ENCODE measurements at regions of chr14 and their contacts with region 1.

Region 1: GRCh38 chr14:68939893-68940613 is 39.0 kb downstream of the ACTN1 start:
- DNase-seq: peak; percentile 98
- H3K4me3 ChIP-seq: no peak overlapping the region
- H3K27ac ChIP-seq: peak overlapping the region; percentile 88
- H3K4me1 ChIP-seq: peaks cover 61% of the 10 kb centered on the region
- H3K27me3 ChIP-seq: no peaks in the 10 kb centered on the region
- CTCF ChIP-seq: no peak
- POLR2A ChIP-seq: peak; percentile 51

Region 2: GRCh38 chr14:68874746-68875155 is 65.3 kb before region 1 on chr14:
- CTCF ChIA-PET with region 1: no interaction called
- POLR2A ChIA-PET with region 1: no interaction called
- dilution Hi-C with region 1: no loop called
- intact Hi-C with region 1: no loop called
- DNase-seq: no peak
- H3K4me3 ChIP-seq: no peak overlapping the region
- H3K27ac ChIP-seq: no peak overlapping the region
- H3K4me1 ChIP-seq: no peaks in the 10 kb centered on the region
- H3K27me3 ChIP-seq: no peaks in the 10 kb centered on the region
- CTCF ChIP-seq: no peak
- POLR2A ChIP-seq: no peak

Region 3: DNA sequence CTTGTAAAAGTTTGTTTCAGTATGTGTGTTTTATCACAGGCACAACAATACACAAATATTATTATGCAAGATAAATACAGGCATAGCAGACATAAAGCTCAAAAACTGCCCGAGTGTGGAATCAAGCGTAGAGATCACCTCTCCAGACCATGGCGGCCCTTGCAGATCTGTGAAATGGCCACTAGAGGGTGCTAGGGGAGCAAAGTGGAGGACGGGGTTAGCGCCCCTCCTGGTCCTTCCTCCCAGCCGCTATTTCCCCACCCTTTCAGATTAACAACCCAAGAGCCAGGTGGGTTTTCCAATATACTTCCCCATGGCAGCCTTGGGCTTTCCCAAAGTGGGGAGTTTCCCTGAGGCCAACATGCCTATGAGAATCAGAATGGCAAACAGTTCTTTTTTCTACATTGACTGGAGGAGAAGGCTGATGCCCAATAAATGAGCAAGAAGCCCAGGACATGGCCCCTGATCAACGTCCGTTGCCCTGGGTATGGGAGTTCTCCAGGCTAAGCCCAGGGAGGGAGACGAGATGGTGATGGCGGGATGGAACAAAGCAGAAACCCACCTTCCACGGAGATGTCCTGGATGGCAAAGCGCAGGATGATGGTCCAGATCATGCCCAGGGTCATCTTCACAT is 28.3 kb before region 1 on chr14:
- CTCF ChIA-PET with region 1: interaction called, 22 read pairs
- POLR2A ChIA-PET with region 1: no interaction called
- dilution Hi-C with region 1: no loop called
- intact Hi-C with region 1: loop called (anchors 1 kb)
- DNase-seq: peak; percentile 76
- H3K4me3 ChIP-seq: no peak overlapping the region
- H3K27ac ChIP-seq: no peak overlapping the region
- H3K4me1 ChIP-seq: no peaks in the 10 kb centered on the region
- H3K27me3 ChIP-seq: no peaks in the 10 kb centered on the region
- CTCF ChIP-seq: peak; percentile 96 to 99
- POLR2A ChIP-seq: no peak

Region 4: DNA sequence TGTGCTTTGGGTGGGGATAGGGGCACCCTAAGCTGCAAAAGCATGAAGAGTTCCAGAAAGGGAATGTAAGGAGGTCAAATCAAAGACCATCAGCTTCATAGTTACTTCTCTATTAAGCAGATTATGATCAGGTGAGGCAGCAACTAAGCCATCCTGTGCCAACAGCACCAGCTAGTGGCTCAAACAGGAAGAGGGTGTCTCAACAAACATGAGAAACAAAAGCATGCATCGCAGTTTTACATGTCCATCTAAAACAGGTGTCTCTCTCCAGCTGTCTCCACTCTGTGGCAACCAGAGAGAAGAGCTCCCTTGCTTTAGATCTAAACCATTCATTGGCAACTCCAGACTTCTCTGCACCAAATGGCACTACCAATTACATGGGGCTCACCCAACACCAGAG is 13.8 kb before region 1 on chr14:
- CTCF ChIA-PET with region 1: interaction called, 11 read pairs
- POLR2A ChIA-PET with region 1: interaction called, 4 read pairs
- dilution Hi-C with region 1: no loop called
- intact Hi-C with region 1: loop called (anchors 1 kb)
- DNase-seq: no peak
- H3K4me3 ChIP-seq: no peak overlapping the region
- H3K27ac ChIP-seq: no peak overlapping the region
- H3K4me1 ChIP-seq: no peaks in the 10 kb centered on the region
- H3K27me3 ChIP-seq: no peaks in the 10 kb centered on the region
- CTCF ChIP-seq: peak; percentile 27 to 46
- POLR2A ChIP-seq: no peak

Region 5: GRCh38 chr14:68951042-68951914 is 11.2 kb after region 1 on chr14:
- CTCF ChIA-PET with region 1: interaction called, 25 read pairs
- POLR2A ChIA-PET with region 1: interaction called, 5 read pairs
- dilution Hi-C with region 1: no loop called
- intact Hi-C with region 1: loop called (anchors 1 kb)
- DNase-seq: peak; percentile 74
- H3K4me3 ChIP-seq: no peak overlapping the region
- H3K27ac ChIP-seq: peak overlapping the region; percentile 77
- H3K4me1 ChIP-seq: peaks cover 78% of the 10 kb centered on the region
- H3K27me3 ChIP-seq: no peaks in the 10 kb centered on the region
- CTCF ChIP-seq: no peak
- POLR2A ChIP-seq: no peak

Region 6: GRCh38 chr14:68958553-68958952 is 18.5 kb after region 1 on chr14:
- CTCF ChIA-PET with region 1: interaction called, 18 read pairs
- POLR2A ChIA-PET with region 1: interaction called, 4 read pairs
- dilution Hi-C with region 1: no loop called
- intact Hi-C with region 1: loop called (anchors 1 kb)
- DNase-seq: peak; percentile 89
- H3K4me3 ChIP-seq: no peak overlapping the region
- H3K27ac ChIP-seq: peak overlapping the region; percentile 56
- H3K4me1 ChIP-seq: peaks cover 62% of the 10 kb centered on the region
- H3K27me3 ChIP-seq: no peaks in the 10 kb centered on the region
- CTCF ChIP-seq: no peak
- POLR2A ChIP-seq: no peak

Region 7: GRCh38 chr14:69079183-69079742 is 139.2 kb after region 1 on chr14:
- CTCF ChIA-PET with region 1: interaction called, 3 read pairs
- POLR2A ChIA-PET with region 1: no interaction called
- dilution Hi-C with region 1: no loop called
- intact Hi-C with region 1: loop called (anchors 1 kb)
- DNase-seq: peak; percentile 94
- H3K4me3 ChIP-seq: peak overlapping the region in 1 of 3 experiments; percentile 33
- H3K27ac ChIP-seq: peak overlapping the region; percentile 100
- H3K4me1 ChIP-seq: peaks cover 47% of the 10 kb centered on the region
- H3K27me3 ChIP-seq: no peaks in the 10 kb centered on the region
- CTCF ChIP-seq: no peak
- POLR2A ChIP-seq: no peak

Region 8: DNA sequence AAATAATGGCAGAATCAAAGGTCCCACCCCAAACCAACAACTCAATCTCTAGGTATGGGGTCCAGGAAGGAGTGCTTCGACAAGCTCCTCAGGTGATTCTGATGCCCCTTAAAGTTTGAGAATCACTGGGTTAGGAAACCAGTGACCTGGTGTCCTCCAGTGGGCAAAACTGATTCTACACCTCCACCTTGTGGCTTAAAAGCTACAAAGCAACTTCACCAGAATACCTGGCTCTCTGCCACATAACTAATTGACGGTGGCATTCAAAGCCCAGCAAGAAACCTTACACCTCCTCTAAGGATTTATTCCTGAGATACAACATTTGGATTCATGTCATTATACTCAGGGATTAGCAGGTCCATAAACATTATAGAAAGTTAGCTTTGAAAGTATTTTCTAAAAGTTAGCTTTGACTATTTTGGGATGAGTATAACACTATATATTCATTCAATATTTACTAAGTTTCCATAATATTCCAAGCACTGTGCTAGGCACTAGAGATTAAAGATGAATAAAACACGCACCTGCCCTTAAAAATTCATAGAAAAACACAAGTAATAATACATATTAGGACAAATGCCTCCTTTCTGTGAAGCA is 167.5 kb after region 1 on chr14:
- CTCF ChIA-PET with region 1: interaction called, 11 read pairs
- POLR2A ChIA-PET with region 1: no interaction called
- dilution Hi-C with region 1: no loop called
- intact Hi-C with region 1: no loop called
- DNase-seq: peak; percentile 76
- H3K4me3 ChIP-seq: no peak overlapping the region
- H3K27ac ChIP-seq: no peak overlapping the region
- H3K4me1 ChIP-seq: peaks cover 2% of the 10 kb centered on the region
- H3K27me3 ChIP-seq: no peaks in the 10 kb centered on the region
- CTCF ChIP-seq: peak; percentile 58 to 73
- POLR2A ChIP-seq: no peak

Region 9: GRCh38 chr14:69118313-69118712 is 178.3 kb after region 1 on chr14:
- CTCF ChIA-PET with region 1: no interaction called
- POLR2A ChIA-PET with region 1: no interaction called
- dilution Hi-C with region 1: no loop called
- intact Hi-C with region 1: no loop called
- DNase-seq: no peak
- H3K4me3 ChIP-seq: no peak overlapping the region
- H3K27ac ChIP-seq: no peak overlapping the region
- H3K4me1 ChIP-seq: no peaks in the 10 kb centered on the region
- H3K27me3 ChIP-seq: no peaks in the 10 kb centered on the region
- CTCF ChIP-seq: no peak
- POLR2A ChIP-seq: no peak

Region 10: DNA sequence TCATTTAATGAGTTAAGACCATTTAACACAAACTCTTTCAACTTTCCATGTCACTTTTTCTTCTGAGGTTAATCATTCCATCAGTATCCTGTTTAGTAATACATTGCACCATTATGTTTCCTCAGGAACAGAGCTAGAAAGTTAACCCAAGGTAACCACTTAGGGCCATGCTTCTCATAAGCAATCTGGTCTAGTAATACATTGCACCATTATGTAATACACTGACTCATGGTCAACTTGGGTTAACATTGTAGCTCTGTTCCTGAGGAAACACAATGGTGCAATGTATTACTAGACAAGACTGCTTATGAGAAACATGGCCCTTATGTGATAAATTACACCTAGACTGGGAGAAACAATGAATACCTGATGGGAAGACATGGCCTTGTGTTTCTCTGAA is 436.4 kb after region 1 on chr14:
- CTCF ChIA-PET with region 1: no interaction called
- POLR2A ChIA-PET with region 1: no interaction called
- dilution Hi-C with region 1: no loop called
- intact Hi-C with region 1: no loop called
- DNase-seq: no peak
- H3K4me3 ChIP-seq: no peak overlapping the region
- H3K27ac ChIP-seq: no peak overlapping the region
- H3K4me1 ChIP-seq: no peaks in the 10 kb centered on the region
- H3K27me3 ChIP-seq: no peaks in the 10 kb centered on the region
- CTCF ChIP-seq: no peak
- POLR2A ChIP-seq: no peak